K562 (cell line): ENCODE measurements at regions of chr12 and their contacts with region 1.

Region 1: DNA sequence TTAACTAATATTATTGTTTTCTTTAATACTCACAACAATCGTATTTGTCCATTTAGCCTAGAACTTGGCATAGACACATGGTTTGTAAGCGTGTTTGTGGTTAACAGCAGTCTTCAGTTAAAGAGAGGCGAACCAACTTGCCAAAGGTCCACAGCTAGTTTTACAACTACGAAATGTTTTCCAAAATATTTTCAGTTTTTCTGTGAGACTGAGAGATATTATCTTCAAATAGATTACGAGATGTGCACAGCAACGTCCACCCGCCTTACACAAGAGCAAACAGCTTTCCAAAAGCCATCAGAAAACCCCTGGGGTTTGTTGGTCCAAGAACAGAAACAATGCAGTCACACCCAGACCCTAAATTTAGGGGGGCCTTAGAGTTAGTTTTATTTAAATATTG is 58.6 kb upstream of the RASSF3 start:
- DNase-seq: no peak
- ATAC-seq: no peak
- H3K4me3 ChIP-seq: no peak overlapping the region
- H3K27ac ChIP-seq: no peak overlapping the region
- H3K4me1 ChIP-seq: no peaks in the 10 kb centered on the region
- H3K27me3 ChIP-seq: peaks cover 4 to 12% of the 10 kb centered on the region in 2 experiments; a peak in 4 of 5 replicates
- CTCF ChIP-seq: no peak
- EP300 ChIP-seq: no peak
- POLR2A ChIP-seq: no peak
- RAD21 ChIP-seq: no peak

Region 2: DNA sequence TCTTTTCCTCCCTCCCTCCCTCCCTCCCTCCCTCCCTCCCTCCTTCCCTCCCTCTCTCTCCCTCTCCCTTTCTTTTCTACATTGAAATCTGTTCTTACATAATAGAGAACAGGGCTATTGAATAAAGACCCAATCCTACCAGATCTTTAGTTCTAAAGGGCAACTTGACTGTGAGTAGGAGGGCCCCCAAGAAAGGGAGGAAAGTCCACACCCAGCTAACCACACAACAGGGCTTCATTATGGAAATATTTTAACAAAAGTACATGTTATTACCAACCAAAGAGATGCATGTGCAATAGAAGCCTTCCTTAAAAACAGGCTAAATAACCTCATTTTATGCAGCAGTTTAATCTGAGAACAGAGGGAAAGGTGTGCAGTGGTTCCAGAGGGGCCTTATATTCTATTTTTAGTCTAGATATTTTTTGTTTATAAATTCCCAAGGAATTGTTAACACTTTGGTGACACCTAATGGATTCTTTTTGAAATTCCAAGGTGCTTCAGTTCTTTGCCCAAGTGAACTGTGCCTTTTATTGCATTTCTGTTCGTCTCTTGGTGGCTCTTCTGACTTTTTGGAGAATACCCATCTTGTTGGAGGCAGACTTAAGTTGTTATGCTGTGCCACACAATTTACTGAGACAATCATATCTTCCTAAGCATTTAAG is 144.5 kb after region 1 on chr12:
- CTCF ChIA-PET with region 1: interaction called, 35 read pairs
- POLR2A ChIA-PET with region 1: no interaction called
- in situ Hi-C with region 1: loop called (anchors 5 kb)
- intact Hi-C with region 1: loop called (anchors 1 kb)
- DNase-seq: peak in 2 of 4 experiments; percentile 24 to 44
- ATAC-seq: peak; percentile 11; the same call in 1 of the 3 replicates
- H3K4me3 ChIP-seq: no peak overlapping the region
- H3K27ac ChIP-seq: no peak overlapping the region
- H3K4me1 ChIP-seq: peaks cover 14 to 17% of the 10 kb centered on the region in 2 experiments; a peak in 4 of 5 replicates
- H3K27me3 ChIP-seq: no peaks in the 10 kb centered on the region
- CTCF ChIP-seq: peak in 2 of 3 experiments; percentile 40 to 58; a peak in 3 of 6 replicates
- EP300 ChIP-seq: no peak
- POLR2A ChIP-seq: no peak
- RAD21 ChIP-seq: peak; percentile 73 to 82

Region 3: DNA sequence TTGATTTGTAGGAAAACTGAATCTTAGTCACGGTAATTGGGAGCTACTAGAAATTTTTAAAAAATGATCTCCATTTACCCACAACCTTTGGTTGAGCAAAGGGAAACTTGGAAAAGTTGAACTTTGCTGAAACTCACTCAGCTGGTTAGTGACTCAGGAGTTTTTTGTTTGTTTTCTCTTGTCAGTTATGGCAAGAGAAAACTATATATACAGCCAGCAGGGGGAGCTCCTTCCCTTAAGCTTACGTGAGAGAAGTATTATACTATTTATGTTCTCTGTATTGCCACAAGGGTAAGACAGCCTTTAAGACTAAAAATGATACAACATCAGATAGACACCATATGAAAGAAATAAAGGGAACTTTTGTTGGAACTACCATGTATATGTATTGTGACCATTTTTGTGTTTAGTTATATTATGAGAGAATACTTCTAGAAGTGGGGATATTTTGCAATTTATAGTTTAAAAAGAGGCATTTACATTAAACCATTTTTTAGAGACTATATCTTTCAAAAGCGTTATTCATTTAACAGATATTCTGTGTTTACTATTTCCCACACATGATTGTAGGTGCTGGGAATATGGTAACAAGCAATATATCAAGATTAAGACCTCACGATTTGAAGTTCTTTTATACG is 244.6 kb after region 1 on chr12:
- CTCF ChIA-PET with region 1: no interaction called
- POLR2A ChIA-PET with region 1: no interaction called
- in situ Hi-C with region 1: loop called (anchors 10 kb)
- intact Hi-C with region 1: loop called (anchors 2 kb)
- DNase-seq: peak; percentile 62 to 90 (median 70)
- ATAC-seq: peak; percentile 97
- H3K4me3 ChIP-seq: no peak overlapping the region
- H3K27ac ChIP-seq: no peak overlapping the region
- H3K4me1 ChIP-seq: no peaks in the 10 kb centered on the region
- H3K27me3 ChIP-seq: peaks cover 5 to 13% of the 10 kb centered on the region in 2 experiments; a peak in 4 of 5 replicates
- CTCF ChIP-seq: peak; percentile 76 to 96 (median 89)
- EP300 ChIP-seq: peak; percentile 54
- POLR2A ChIP-seq: no peak
- RAD21 ChIP-seq: peak; percentile 45 to 69